OCI-LY7 (cell line): ENCODE measurements at regions of chr12 and their contacts with region 1.

Region 1: GRCh38 chr12:89840162-89840922 is 131.7 kb upstream of the ATP2B1 start:
- DNase-seq: peak; percentile 81
- H3K4me3 ChIP-seq: peak overlapping the region; percentile 12
- H3K27ac ChIP-seq: peak overlapping the region; percentile 69
- H3K4me1 ChIP-seq: peaks cover 32% of the 10 kb centered on the region
- CTCF ChIP-seq: no peak

Region 2: GRCh38 chr12:89610366-89610765 is 230.0 kb before region 1 on chr12:
- CTCF ChIA-PET with region 1: no interaction called
- POLR2A ChIA-PET with region 1: no interaction called
- intact Hi-C with region 1: no loop called
- DNase-seq: no peak
- H3K4me3 ChIP-seq: no peak overlapping the region
- H3K27ac ChIP-seq: no peak overlapping the region
- H3K4me1 ChIP-seq: no peaks in the 10 kb centered on the region
- CTCF ChIP-seq: no peak

Region 3: DNA sequence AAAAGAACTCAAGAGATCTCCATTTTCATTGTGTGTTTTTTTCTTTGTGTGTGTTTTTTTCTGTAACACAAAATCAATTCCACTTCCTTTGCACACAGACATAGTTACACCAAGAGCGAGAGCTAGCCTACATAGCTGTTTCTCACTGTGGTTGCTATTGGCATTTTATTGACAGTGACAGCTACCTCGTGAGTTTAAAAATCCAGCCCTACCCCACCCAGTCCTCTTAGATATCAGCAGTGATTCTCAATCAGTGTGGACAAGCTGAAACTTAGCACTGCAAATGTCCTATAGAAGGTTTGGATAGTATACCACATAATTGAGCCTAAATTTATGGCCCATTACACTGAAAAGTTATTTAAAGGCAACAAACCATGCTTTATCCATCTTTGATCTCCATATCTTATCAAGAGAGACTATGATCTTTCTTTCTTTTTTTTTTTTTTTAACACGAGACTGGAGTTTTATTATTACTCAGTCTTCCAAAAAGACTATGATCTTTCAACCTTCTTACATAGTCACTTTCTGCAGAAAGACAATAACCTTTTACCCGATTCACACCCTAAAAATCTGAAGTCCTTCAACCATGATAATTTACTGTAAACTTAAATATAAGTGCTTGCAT is 178.5 kb before region 1 on chr12:
- CTCF ChIA-PET with region 1: no interaction called
- POLR2A ChIA-PET with region 1: no interaction called
- intact Hi-C with region 1: no loop called
- DNase-seq: no peak
- H3K4me3 ChIP-seq: no peak overlapping the region
- H3K27ac ChIP-seq: no peak overlapping the region
- H3K4me1 ChIP-seq: peaks cover 20% of the 10 kb centered on the region
- CTCF ChIP-seq: no peak

Region 4: GRCh38 chr12:89825591-89826449 is 14.5 kb before region 1 on chr12:
- CTCF ChIA-PET with region 1: no interaction called
- POLR2A ChIA-PET with region 1: interaction called, 12 read pairs
- intact Hi-C with region 1: no loop called
- DNase-seq: peak; percentile 16
- H3K4me3 ChIP-seq: no peak overlapping the region
- H3K27ac ChIP-seq: no peak overlapping the region
- H3K4me1 ChIP-seq: peaks cover 23% of the 10 kb centered on the region
- CTCF ChIP-seq: peak; percentile 34; the same call in 1 of the 2 replicates

Region 5: DNA sequence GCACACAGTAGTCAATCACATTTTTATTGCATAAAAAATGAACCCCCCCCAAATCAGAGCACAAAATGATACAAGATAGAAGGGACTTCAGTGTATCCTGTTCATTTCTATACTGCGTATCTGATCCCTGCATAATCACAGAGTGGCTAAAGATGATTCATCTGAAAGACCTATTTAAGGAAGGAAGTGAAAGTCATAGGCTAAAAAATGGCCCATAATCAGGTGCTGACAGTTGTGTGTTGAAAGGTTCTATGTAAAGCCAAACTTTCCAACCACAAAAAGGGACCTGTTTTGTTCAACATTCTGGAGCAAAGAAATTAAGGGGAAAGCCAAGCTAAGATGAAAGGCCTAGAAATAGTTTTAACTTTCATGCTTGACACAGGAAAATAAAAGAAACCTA is 16.1 kb after region 1 on chr12:
- CTCF ChIA-PET with region 1: interaction called, 7 read pairs
- POLR2A ChIA-PET with region 1: interaction called, 30 read pairs
- intact Hi-C with region 1: no loop called
- DNase-seq: peak; percentile 91
- H3K4me3 ChIP-seq: peak overlapping the region; percentile 44
- H3K27ac ChIP-seq: peak overlapping the region; percentile 87
- H3K4me1 ChIP-seq: peaks cover 59% of the 10 kb centered on the region
- CTCF ChIP-seq: no peak

Region 6: DNA sequence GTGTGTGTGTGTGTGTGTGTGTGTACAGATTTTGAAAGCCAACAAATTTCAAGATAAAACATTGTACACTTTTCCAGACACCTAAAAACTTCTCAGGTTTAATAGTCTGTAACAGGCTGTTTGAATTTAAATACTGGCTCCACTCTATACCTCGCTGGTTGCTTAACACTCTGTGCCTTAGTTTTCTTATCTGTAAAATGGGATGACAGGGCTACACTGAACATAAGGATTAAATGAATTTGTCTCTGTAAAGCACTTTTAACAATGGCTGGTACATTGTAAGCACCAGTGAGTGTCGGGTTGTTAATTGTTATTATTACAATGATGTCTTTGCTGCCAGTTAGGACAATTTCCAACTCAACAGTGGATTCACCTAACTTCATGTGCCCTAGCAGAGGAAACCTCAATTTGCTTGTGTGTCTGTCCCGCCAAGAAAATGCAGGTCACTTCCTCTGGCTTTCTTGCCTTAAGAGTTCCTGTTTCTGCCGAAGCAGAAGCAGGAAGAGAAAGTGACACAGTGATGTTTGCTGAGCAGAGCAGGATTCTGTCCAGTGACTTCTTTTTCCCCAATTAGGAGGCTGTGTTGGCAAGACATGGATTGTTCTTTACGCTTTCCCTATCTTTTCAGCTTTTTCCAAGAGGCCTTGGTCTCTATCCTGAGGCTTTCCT is 22.3 kb after region 1 on chr12:
- CTCF ChIA-PET with region 1: no interaction called
- POLR2A ChIA-PET with region 1: interaction called, 30 read pairs
- intact Hi-C with region 1: no loop called
- DNase-seq: peak; percentile 91
- H3K4me3 ChIP-seq: peak overlapping the region; percentile 49
- H3K27ac ChIP-seq: peak overlapping the region; percentile 78
- H3K4me1 ChIP-seq: peaks cover 63% of the 10 kb centered on the region
- CTCF ChIP-seq: no peak

Region 7: DNA sequence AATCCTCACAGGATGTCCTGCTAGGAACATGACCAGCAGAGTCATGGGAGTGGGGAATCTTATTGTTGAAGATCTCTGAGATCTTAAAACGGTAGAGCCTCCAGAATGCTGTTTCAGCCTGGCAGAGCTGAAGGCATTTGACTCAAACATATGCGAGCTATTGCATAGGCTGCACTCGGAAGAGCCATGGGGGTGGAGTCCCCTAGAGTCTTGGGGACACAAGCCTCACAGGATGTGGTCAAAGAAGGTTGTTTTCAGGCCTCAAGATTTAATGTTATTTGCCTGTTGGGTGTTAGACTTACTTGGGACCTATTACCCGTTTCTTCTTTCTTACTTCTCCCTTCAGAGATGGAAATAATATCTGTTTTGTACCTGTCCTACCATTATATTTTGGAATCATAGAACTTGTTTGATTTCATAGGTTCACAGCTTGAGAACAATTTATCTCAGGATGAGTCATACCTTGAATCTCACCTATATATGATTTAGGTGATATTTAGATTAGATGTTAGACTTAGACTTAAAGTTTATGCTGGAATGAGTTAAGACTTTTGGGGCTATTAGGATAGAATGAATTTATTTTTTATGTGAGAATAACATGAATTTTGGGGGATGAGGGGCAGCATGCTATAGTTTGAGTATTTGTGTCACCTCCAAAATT is 40.5 kb after region 1 on chr12:
- CTCF ChIA-PET with region 1: interaction called, 4 read pairs
- POLR2A ChIA-PET with region 1: interaction called, 10 read pairs
- intact Hi-C with region 1: no loop called
- DNase-seq: peak; percentile 82
- H3K4me3 ChIP-seq: peak overlapping the region; percentile 10
- H3K27ac ChIP-seq: peak overlapping the region; percentile 63
- H3K4me1 ChIP-seq: peaks cover 46% of the 10 kb centered on the region
- CTCF ChIP-seq: no peak

Region 8: GRCh38 chr12:89901906-89902642 is 61.7 kb after region 1 on chr12:
- CTCF ChIA-PET with region 1: no interaction called
- POLR2A ChIA-PET with region 1: no interaction called
- intact Hi-C with region 1: no loop called
- DNase-seq: no peak
- H3K4me3 ChIP-seq: no peak overlapping the region
- H3K27ac ChIP-seq: no peak overlapping the region
- H3K4me1 ChIP-seq: no peaks in the 10 kb centered on the region
- CTCF ChIP-seq: no peak

Region 9: GRCh38 chr12:90102957-90103652 is 262.8 kb after region 1 on chr12:
- CTCF ChIA-PET with region 1: no interaction called
- POLR2A ChIA-PET with region 1: no interaction called
- intact Hi-C with region 1: no loop called
- DNase-seq: peak; percentile 69
- H3K4me3 ChIP-seq: no peak overlapping the region
- H3K27ac ChIP-seq: no peak overlapping the region
- H3K4me1 ChIP-seq: peaks cover 11% of the 10 kb centered on the region
- CTCF ChIP-seq: peak; percentile 91